Panc1 (cell line): ENCODE measurements at regions of chr6 and their contacts with region 1.

Region 1: GRCh38 chr6:16196260-16196914 is 42.0 kb upstream of the GMPR start:
- DNase-seq: no peak
- ATAC-seq: peak; percentile 47; the same call in 1 of the 2 replicates
- H3K4me3 ChIP-seq: peak overlapping the region; percentile 7 to 41; a peak in 2 of 4 replicates
- H3K27ac ChIP-seq: no peak overlapping the region
- H3K4me1 ChIP-seq: no peaks in the 10 kb centered on the region; the same call in 1 of the 2 replicates
- H3K27me3 ChIP-seq: peaks cover 16% of the 10 kb centered on the region
- CTCF ChIP-seq: no peak

Region 2: GRCh38 chr6:16409531-16410441 is 213.4 kb after region 1 on chr6:
- CTCF ChIA-PET with region 1: interaction called, 10 read pairs
- POLR2A ChIA-PET with region 1: no interaction called
- in situ Hi-C with region 1: no loop called
- intact Hi-C with region 1: no loop called
- DNase-seq: peak; percentile 36
- ATAC-seq: peak; percentile 88
- H3K4me3 ChIP-seq: no peak overlapping the region
- H3K27ac ChIP-seq: no peak overlapping the region
- H3K4me1 ChIP-seq: no peaks in the 10 kb centered on the region
- H3K27me3 ChIP-seq: no peaks in the 10 kb centered on the region
- CTCF ChIP-seq: peak; percentile 90

Region 3: GRCh38 chr6:17093686-17094085 is 897.3 kb after region 1 on chr6:
- CTCF ChIA-PET with region 1: no interaction called
- POLR2A ChIA-PET with region 1: no interaction called
- in situ Hi-C with region 1: no loop called
- intact Hi-C with region 1: no loop called
- DNase-seq: no peak
- ATAC-seq: peak; percentile 74
- H3K4me3 ChIP-seq: no peak overlapping the region
- H3K27ac ChIP-seq: no peak overlapping the region
- H3K4me1 ChIP-seq: no peaks in the 10 kb centered on the region
- H3K27me3 ChIP-seq: peaks cover 4% of the 10 kb centered on the region
- CTCF ChIP-seq: peak; percentile 59